Activated B cell treated with CpG ODN at 0.5 μM for 24 hours (primary cell): ENCODE measurements at regions of chr13 and their contacts with region 1.

Region 1: DNA sequence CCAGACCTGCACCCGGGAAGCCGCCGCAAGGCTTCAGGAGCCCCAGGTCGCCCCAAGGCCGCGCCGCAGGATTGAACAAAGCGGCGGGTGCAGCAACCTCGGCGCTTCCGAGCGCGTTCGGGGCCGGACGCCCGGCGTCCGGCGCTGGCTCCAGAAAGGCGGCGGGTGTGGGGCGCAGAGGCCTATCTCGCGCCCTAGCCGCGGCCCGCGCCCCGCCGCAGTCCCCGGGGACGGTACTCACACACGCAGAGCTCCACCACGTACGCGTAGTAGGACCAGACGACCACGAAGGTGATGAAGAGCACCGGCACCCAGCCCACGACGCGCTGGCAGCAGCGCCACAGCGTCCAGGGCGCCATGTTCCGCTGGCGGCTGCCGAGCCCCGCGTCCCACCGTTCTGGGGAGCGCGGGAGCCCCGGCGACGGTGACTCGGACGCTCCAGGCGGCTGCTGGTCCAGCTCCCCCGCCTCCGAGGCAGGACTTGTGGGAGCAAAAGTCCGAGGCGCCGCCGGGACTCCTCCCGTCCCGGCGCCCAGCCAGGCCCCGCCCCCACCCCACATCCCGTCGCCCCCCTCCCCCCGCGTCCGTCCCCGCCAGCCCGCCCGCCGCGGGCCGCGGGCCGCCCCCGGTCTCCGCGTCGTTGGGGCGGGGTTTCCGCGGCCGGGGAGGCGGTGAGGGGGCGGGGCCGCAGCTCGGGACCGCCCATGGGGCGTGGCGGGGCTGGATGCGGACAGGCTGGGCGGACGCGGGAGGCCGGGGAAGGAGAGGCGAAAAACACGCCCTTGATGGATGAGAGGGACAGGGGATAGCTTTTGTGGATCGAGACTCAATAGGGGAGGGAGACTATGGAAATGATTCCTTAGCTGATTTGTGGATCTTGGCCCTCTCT is at the start of gene ZDHHC20:
- DNase-seq: peak; percentile 98
- ATAC-seq: peak; percentile 91
- H3K4me3 Mint-ChIP-seq: peak within 1 kb of the TSS; percentile 90
- H3K27ac Mint-ChIP-seq: peak within 1 kb of the TSS; percentile 86
- H3K4me1 Mint-ChIP-seq: peaks cover 36% of the 10 kb centered on the region
- H3K27me3 Mint-ChIP-seq: no peaks in the 10 kb centered on the region
- CTCF ChIP-seq: no peak
- total RNA-seq, gene ZDHHC20: 45.0 and 49.2 TPM in 2 replicates

Region 2: GRCh38 chr13:20902438-20903163 is 556.5 kb before region 1 on chr13 and contains the start of gene XPO4:
- CTCF ChIA-PET with region 1: no interaction called
- POLR2A ChIA-PET with region 1: no interaction called
- intact Hi-C with region 1: loop called (anchors 5 kb)
- DNase-seq: peak; percentile 80
- ATAC-seq: peak; percentile 93
- H3K4me3 Mint-ChIP-seq: peak within 1 kb of the TSS; percentile 91
- H3K27ac Mint-ChIP-seq: peak within 1 kb of the TSS; percentile 86
- H3K4me1 Mint-ChIP-seq: peaks cover 32% of the 10 kb centered on the region
- H3K27me3 Mint-ChIP-seq: peaks cover 2% of the 10 kb centered on the region
- CTCF ChIP-seq: no peak
- total RNA-seq, gene XPO4: 25.2 and 27.4 TPM in 2 replicates

Region 3: DNA sequence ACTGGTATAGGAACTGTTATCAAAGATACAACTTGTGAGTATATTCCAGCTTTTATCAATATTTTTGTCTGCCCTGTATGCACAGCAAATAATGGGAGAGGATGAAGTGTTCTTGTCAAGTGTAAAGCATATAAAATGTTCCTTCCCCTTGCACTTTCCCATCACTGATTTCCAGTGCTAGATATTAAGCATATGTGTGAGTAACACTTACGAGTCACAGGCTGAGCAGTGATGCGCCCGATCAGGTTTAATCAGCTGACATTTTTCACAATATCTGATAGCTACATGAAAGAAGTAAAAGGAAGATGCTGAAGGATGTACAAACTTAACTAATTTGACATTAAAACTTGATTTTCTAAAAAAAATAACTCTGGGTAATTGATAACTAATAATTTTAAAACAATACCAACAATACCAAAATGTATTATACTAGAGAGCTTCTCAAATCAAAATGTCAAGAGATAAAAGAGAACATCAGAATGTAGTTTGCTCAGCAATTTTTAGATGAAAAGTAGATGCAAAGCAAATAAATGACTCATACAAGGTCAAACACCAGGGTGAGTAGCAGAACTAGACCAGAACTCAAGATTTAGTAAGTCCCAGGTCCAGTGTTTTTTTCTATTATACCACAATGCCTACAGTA is 56.4 kb before region 1 on chr13:
- CTCF ChIA-PET with region 1: no interaction called
- POLR2A ChIA-PET with region 1: no interaction called
- intact Hi-C with region 1: loop called (anchors 5 kb)
- DNase-seq: no peak
- ATAC-seq: no peak
- H3K4me3 Mint-ChIP-seq: no peak overlapping the region
- H3K27ac Mint-ChIP-seq: no peak overlapping the region
- H3K4me1 Mint-ChIP-seq: no peaks in the 10 kb centered on the region
- H3K27me3 Mint-ChIP-seq: no peaks in the 10 kb centered on the region
- CTCF ChIP-seq: no peak

Region 4: GRCh38 chr13:21420706-21421105 is 38.4 kb before region 1 on chr13:
- CTCF ChIA-PET with region 1: interaction called, 3 read pairs
- POLR2A ChIA-PET with region 1: no interaction called
- intact Hi-C with region 1: loop called (anchors 5 kb)
- DNase-seq: no peak
- ATAC-seq: no peak
- H3K4me3 Mint-ChIP-seq: no peak overlapping the region
- H3K27ac Mint-ChIP-seq: no peak overlapping the region
- H3K4me1 Mint-ChIP-seq: peaks cover 2% of the 10 kb centered on the region
- H3K27me3 Mint-ChIP-seq: no peaks in the 10 kb centered on the region
- CTCF ChIP-seq: no peak

Region 5: DNA sequence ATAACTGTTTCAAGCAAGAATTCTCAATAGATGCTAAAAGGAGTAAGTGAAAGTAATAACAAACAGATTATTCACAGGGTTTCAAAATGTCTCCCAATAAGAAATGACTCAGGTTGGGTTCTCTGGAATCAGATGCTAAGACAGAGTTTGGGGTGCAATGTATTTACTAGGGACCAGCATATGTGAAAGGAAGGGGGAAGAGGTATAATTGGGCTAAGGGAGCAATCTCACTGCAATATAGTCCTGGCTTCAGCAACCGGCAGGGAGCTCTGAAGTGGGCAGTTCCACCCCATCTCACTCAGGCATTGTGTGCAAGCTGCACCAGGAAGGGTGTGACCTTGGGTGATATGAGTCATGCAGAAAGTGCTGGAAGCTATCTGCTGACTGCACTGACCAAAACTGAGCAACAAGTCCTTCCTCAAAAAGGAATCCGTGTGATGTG is 23.3 kb before region 1 on chr13:
- CTCF ChIA-PET with region 1: no interaction called
- POLR2A ChIA-PET with region 1: interaction called, 35 read pairs
- intact Hi-C with region 1: loop called (anchors 1 kb)
- DNase-seq: peak; percentile 36
- ATAC-seq: peak; percentile 99
- H3K4me3 Mint-ChIP-seq: peak overlapping the region; percentile 67
- H3K27ac Mint-ChIP-seq: peak overlapping the region; percentile 93
- H3K4me1 Mint-ChIP-seq: peaks cover 48% of the 10 kb centered on the region
- H3K27me3 Mint-ChIP-seq: no peaks in the 10 kb centered on the region
- CTCF ChIP-seq: no peak

Region 6: GRCh38 chr13:21476893-21477472 is 17.9 kb after region 1 on chr13:
- CTCF ChIA-PET with region 1: interaction called, 9 read pairs
- POLR2A ChIA-PET with region 1: no interaction called
- intact Hi-C with region 1: loop called (anchors 2 kb)
- DNase-seq: peak; percentile 62
- ATAC-seq: peak; percentile 92
- H3K4me3 Mint-ChIP-seq: peak overlapping the region; percentile 87
- H3K27ac Mint-ChIP-seq: no peak overlapping the region
- H3K4me1 Mint-ChIP-seq: peaks cover 13% of the 10 kb centered on the region
- H3K27me3 Mint-ChIP-seq: no peaks in the 10 kb centered on the region
- CTCF ChIP-seq: peak; percentile 36

Region 7: GRCh38 chr13:21670883-21671619 is 212.0 kb after region 1 on chr13 and contains the start of gene FGF9:
- CTCF ChIA-PET with region 1: no interaction called
- POLR2A ChIA-PET with region 1: no interaction called
- intact Hi-C with region 1: loop called (anchors 10 kb)
- DNase-seq: peak; percentile 76
- ATAC-seq: peak; percentile 77
- H3K4me3 Mint-ChIP-seq: peak within 1 kb of the TSS; percentile 85
- H3K27ac Mint-ChIP-seq: peak within 1 kb of the TSS; percentile 61
- H3K4me1 Mint-ChIP-seq: peaks cover 48% of the 10 kb centered on the region
- H3K27me3 Mint-ChIP-seq: peaks cover 43% of the 10 kb centered on the region
- CTCF ChIP-seq: no peak
- total RNA-seq, gene FGF9: 0.22 and 0.49 TPM in 2 replicates